Endothelial cell of umbilical vein (primary cell): ENCODE measurements at regions of chr15 and their contacts with region 1.

Region 1: GRCh38 chr15:62066663-62067447 is at the start of gene C2CD4A:
- DNase-seq: peak; percentile 81
- H3K4me3 ChIP-seq: peak within 1 kb of the TSS; percentile 37 to 44 (median 38)
- H3K27ac ChIP-seq: no peak within 1 kb of the TSS
- H3K4me1 ChIP-seq: peaks cover 31% of the 10 kb centered on the region
- H3K27me3 ChIP-seq: no peaks in the 10 kb centered on the region
- CTCF ChIP-seq: peak in 1 of 2 donors; percentile 43
- POLR2A ChIP-seq: no peak
- total RNA-seq, gene C2CD4A: 0.46 and 1.1 TPM in 2 replicates

Region 2: GRCh38 chr15:61871926-61872522 is 194.8 kb before region 1 on chr15:
- CTCF ChIA-PET with region 1: interaction called, 5 read pairs
- POLR2A ChIA-PET with region 1: no interaction called
- dilution Hi-C with region 1: no loop called
- intact Hi-C with region 1: loop called (anchors 1 kb)
- DNase-seq: peak; percentile 49
- H3K4me3 ChIP-seq: no peak overlapping the region
- H3K27ac ChIP-seq: no peak overlapping the region
- H3K4me1 ChIP-seq: no peaks in the 10 kb centered on the region
- H3K27me3 ChIP-seq: no peaks in the 10 kb centered on the region
- CTCF ChIP-seq: peak in 1 of 2 donors; percentile 31
- POLR2A ChIP-seq: no peak

Region 3: GRCh38 chr15:62087671-62088352 is 21.0 kb after region 1 on chr15:
- CTCF ChIA-PET with region 1: interaction called, 13 read pairs
- POLR2A ChIA-PET with region 1: no interaction called
- dilution Hi-C with region 1: no loop called
- intact Hi-C with region 1: no loop called
- DNase-seq: peak; percentile 90
- H3K4me3 ChIP-seq: no peak overlapping the region
- H3K27ac ChIP-seq: no peak overlapping the region
- H3K4me1 ChIP-seq: peaks cover 17% of the 10 kb centered on the region
- H3K27me3 ChIP-seq: no peaks in the 10 kb centered on the region
- CTCF ChIP-seq: no peak
- POLR2A ChIP-seq: no peak

Region 4: GRCh38 chr15:62119227-62119864 is 52.5 kb after region 1 on chr15:
- CTCF ChIA-PET with region 1: interaction called, 23 read pairs
- POLR2A ChIA-PET with region 1: no interaction called
- dilution Hi-C with region 1: no loop called
- intact Hi-C with region 1: loop called (anchors 1 kb)
- DNase-seq: peak; percentile 98
- H3K4me3 ChIP-seq: peak overlapping the region in 1 of 3 experiments; percentile 13
- H3K27ac ChIP-seq: peak overlapping the region; percentile 92
- H3K4me1 ChIP-seq: peaks cover 41% of the 10 kb centered on the region
- H3K27me3 ChIP-seq: no peaks in the 10 kb centered on the region
- CTCF ChIP-seq: no peak
- POLR2A ChIP-seq: no peak

Region 5: DNA sequence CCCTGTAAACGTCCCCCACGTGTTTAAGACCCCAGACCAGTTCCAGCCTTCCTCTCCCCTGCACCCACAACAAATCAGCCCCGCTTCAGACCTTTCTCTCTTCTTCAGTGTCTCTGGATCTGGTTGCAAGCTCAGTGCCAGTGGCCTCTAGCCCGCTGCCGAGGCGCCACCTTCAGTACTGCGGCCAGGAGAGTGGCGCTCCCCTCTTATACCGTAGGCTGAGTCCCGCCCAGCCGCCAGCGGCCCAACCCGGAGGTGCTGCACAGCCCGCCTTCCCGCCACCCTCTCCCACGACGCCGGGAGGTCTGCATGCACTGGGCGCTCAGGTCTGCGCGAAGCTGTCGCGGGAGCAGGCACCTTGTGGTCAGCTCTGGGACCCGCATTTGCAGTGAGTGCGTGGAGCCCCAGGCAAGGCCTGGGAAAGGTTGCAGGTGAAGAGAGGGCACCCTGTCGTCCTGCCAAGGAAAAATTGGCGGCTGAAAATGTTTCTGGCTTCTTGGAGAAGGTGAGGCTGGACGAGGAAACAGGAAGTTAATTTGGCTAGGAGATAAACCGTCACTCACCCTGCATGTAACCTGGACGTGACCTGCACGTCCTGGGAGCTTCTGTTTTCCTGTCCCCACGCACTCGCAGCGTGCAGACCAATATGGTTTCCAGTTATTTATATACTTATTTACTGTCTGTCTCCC is 98.4 kb after region 1 on chr15 and contains the start of gene C2CD4B:
- CTCF ChIA-PET with region 1: interaction called, 9 read pairs
- POLR2A ChIA-PET with region 1: no interaction called
- dilution Hi-C with region 1: no loop called
- intact Hi-C with region 1: loop called (anchors 1 kb)
- DNase-seq: peak; percentile 89
- H3K4me3 ChIP-seq: peak within 1 kb of the TSS; percentile 49 to 75 (median 66)
- H3K27ac ChIP-seq: peak within 1 kb of the TSS; percentile 78
- H3K4me1 ChIP-seq: peaks cover 31% of the 10 kb centered on the region
- H3K27me3 ChIP-seq: no peaks in the 10 kb centered on the region
- CTCF ChIP-seq: peak in 1 of 2 donors; percentile 19
- POLR2A ChIP-seq: peak; percentile 90
- total RNA-seq, gene C2CD4B: 28.4 and 31.7 TPM in 2 replicates